Endothelial cell of umbilical vein (primary cell): ENCODE measurements at regions of chr9 and their contacts with region 1.

Region 1: DNA sequence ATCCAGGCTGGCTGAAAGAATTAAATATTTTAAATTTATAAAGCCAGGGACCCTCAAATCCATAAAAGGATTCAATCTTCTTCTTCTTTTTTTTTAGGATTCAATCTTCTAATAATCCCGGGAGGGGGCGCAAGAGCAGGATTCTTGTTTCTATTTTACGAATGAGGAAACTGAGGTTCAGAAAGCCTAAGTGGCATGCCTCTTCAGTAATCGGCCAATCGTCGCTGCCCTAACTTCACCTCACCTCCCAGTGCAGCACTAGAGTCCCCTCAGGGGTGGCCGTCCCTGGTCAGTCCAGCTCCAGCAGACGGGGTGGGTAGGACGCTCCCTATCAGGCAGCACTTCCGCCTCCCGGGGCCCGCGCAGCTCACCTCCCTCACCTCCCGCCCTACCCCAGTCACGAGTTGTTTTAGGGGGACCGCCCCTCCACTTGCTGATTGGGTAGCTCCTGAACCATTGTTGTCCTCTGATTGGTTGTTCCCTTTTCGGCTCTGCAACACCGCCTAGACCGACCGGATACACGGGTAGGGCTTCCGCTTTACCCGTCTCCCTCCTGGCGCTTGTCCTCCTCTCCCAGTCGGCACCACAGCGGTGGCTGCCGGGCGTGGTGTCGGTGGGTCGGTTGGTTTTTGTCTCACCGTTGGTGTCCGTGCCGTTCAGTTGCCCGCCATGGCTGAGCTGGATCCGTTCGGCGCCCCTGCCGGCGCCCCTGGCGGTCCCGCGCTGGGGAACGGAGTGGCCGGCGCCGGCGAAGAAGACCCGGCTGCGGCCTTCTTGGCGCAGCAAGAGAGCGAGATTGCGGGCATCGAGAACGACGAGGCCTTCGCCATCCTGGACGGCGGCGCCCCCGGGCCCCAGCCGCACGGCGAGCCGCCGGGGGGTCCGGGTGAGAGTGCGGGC is at the start of gene CLTA:
- DNase-seq: peak; percentile 98
- H3K4me3 ChIP-seq: peak within 1 kb of the TSS; percentile 80 to 93 (median 90)
- H3K27ac ChIP-seq: peak within 1 kb of the TSS; percentile 78
- H3K4me1 ChIP-seq: peaks cover 31% of the 10 kb centered on the region
- H3K27me3 ChIP-seq: no peaks in the 10 kb centered on the region
- CTCF ChIP-seq: peak; percentile 40 to 50
- POLR2A ChIP-seq: peak; percentile 98
- total RNA-seq, gene CLTA: 281 and 317 TPM in 2 replicates

Region 2: DNA sequence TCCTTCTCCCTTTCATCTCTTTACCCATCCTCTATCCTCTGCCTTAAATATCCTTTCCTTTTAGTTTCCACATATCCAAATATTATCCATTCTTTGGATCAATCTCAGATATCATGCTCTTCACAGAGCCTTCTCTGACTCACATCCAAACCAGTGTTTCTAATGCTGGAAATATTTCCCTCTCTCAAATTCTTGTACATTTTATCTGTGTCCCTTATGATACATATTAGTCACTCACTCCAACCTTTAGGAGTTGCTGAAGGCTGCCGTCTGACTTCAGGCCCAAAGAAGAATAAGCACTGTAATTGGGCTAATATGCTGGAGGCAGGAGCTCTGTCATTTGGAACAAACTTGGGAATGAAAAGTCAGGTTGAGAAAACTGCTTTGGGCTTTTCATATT is 857.1 kb before region 1 on chr9:
- CTCF ChIA-PET with region 1: no interaction called
- POLR2A ChIA-PET with region 1: no interaction called
- dilution Hi-C with region 1: no loop called
- intact Hi-C with region 1: no loop called
- DNase-seq: peak; percentile 59
- H3K4me3 ChIP-seq: no peak overlapping the region
- H3K27ac ChIP-seq: peak overlapping the region; percentile 93
- H3K4me1 ChIP-seq: peaks cover 37% of the 10 kb centered on the region
- H3K27me3 ChIP-seq: no peaks in the 10 kb centered on the region
- CTCF ChIP-seq: no peak
- POLR2A ChIP-seq: no peak

Region 3: DNA sequence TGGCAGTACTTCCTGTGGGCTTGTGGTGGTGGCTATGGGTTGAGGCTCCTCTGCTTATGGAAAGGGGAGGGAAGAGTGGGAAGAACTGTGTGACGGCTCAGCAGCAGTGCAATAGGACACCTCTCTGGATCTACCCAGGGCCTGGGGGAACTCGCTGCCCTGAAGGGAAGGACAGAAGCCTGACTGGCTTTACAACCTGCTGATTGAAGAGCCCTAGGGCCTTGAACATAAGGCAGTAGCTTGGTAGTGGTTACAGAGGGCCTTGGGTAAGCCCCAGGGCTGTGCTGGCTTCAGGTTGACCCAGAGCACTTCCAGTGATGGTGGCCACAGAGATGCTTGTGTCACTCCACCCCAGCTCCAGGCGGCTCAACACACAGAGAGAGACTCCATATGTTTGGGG is 15.9 kb before region 1 on chr9:
- CTCF ChIA-PET with region 1: interaction called, 19 read pairs
- POLR2A ChIA-PET with region 1: no interaction called
- dilution Hi-C with region 1: no loop called
- intact Hi-C with region 1: no loop called
- DNase-seq: no peak
- H3K4me3 ChIP-seq: no peak overlapping the region
- H3K27ac ChIP-seq: no peak overlapping the region
- H3K4me1 ChIP-seq: no peaks in the 10 kb centered on the region
- H3K27me3 ChIP-seq: no peaks in the 10 kb centered on the region
- CTCF ChIP-seq: no peak
- POLR2A ChIP-seq: no peak

Region 4: DNA sequence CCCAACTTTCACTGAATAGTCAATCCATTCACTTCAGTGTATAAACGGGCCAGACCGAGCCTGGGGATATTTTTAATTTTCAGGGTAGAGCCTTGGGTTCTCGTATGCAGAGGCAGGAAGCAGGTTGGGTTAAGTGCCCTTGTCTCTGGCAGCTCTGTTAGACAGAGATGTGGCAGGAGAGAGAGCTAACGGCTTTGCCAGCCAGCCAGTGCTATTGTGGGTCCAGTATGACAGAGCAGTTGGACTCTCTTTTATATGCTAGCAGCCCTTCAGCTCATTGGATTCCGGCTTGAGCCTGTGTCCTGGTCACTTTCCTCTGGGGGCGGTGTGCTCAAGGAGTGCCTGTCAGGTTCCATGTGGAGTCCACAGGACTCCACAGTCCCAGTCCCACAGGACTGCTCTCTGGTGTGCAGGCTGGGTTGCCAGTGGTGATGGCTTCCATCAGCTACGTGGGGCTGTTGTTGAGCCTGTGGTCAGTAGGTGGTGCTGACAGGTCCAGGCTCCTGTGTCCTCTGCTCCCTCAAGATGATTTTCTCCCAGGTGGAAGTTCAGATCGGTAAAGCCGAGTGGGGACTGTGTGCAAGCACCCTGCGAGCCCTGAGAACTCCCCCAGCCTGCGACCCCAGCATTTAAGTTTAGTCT is 14.4 kb after region 1 on chr9:
- CTCF ChIA-PET with region 1: interaction called, 23 read pairs
- POLR2A ChIA-PET with region 1: interaction called, 8 read pairs
- dilution Hi-C with region 1: no loop called
- intact Hi-C with region 1: no loop called
- DNase-seq: peak; percentile 15
- H3K4me3 ChIP-seq: no peak overlapping the region
- H3K27ac ChIP-seq: no peak overlapping the region
- H3K4me1 ChIP-seq: peaks cover 31% of the 10 kb centered on the region
- H3K27me3 ChIP-seq: no peaks in the 10 kb centered on the region
- CTCF ChIP-seq: no peak
- POLR2A ChIP-seq: no peak